Right ventricle myocardium superior (tissue), 1 donor: ENCODE measurements at regions of chr2 and their contacts with region 1.

Region 1: GRCh38 chr2:98654699-98655495 is 46.5 kb downstream of the UNC50 start:
- DNase-seq: no peak
- ATAC-seq: no peak

Region 2: DNA sequence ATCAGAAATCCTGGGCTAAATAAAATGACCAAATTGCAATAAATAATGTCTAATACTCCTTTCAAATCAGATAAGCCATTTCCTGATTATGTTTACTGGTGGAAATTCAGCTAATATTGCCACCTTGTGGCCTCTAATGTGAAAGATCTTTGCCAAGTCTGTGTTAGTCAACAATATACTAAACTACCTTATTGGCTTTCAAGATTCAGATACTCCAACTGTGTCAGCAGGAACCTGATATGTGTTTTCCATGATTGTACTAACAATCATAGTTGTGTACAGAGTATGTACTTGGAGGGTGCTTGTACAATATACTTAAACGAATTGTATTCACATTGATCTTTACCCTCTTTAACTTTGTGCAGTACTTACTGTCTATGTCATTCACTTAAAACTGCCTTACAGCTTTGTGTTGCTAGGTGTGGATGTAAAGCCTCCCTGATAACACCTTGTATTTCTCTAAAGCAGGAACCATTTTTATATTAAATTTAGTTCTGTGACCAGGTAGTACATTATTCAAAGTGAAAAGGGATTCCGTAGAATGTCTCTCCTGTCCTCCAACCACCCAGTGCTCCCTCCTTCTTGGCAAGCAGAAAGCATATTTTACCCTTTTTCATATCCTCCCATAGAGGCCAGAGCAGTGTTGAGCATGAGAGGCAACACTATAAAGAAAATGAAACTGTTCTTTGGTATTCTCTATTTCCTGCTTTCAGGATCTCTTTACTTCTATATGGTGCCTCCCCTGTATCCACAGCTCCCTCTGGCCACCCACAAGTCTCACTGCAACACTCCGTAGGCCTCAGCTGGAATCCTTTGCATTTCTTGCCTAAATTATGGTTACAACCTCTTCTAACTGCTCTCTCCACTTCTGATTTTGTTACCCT is 411.4 kb after region 1 on chr2:
- intact Hi-C with region 1: loop called (anchors 5 kb)
- DNase-seq: no peak
- ATAC-seq: peak; percentile 63